ENCODE measurements at regions of chr12 and their contacts with region 1.

Region 1: DNA sequence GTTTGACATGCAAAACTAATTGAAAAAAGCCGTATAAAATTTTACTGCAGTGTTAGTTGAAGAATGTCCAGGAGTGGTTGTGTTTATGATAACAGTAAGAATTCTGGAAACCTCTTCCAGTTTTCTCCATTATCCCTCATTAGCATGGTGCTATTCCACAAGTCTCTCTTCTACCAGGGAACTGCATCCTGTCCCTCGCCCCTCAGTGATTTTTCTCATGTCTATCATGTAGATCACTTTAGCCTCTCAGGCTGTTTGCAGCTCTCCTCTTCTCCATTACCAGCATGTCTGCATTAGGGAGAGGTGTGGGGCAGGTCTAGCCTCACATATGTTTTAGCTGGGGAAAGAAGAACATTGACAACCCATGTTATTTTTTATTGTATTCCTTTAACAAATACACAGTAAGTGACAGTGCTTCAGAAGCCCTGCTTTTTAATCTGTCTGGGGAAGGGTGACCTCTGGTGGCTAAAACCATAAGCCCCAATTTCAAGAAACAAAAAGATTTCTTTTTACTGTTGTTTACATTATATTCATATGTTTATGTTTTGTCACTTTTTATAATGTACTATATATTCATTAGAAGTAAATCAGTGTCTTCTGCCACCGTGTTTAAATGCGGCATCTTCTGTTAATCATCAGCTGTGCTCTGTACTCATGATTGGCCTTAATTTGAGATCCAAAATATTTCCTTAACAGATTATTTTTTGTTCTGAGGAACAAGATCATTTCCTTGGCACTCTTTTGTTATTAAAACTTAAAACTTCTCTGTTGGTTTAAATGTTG is 70.7 kb downstream of the RASSF8 start:
- DNase-seq: peak in 3 of 10 donors; percentile 17 to 46 (median 23)

Region 2: GRCh38 chr12:25960143-25960542 is 69.0 kb before region 1 on chr12:
- intact Hi-C with region 1: loop called (anchors 5 kb)
- DNase-seq: peak in 4 of 10 donors; percentile 19 to 83 (median 40)

Measured in posterior cingulate gyrus (tissue), 11 donors.